ENCODE measurements at regions of chr9 and their contacts with region 1.

Region 1: GRCh38 chr9:83266666-83267496 is 203.9 kb upstream of the RASEF start:
- DNase-seq: no peak

Region 2: DNA sequence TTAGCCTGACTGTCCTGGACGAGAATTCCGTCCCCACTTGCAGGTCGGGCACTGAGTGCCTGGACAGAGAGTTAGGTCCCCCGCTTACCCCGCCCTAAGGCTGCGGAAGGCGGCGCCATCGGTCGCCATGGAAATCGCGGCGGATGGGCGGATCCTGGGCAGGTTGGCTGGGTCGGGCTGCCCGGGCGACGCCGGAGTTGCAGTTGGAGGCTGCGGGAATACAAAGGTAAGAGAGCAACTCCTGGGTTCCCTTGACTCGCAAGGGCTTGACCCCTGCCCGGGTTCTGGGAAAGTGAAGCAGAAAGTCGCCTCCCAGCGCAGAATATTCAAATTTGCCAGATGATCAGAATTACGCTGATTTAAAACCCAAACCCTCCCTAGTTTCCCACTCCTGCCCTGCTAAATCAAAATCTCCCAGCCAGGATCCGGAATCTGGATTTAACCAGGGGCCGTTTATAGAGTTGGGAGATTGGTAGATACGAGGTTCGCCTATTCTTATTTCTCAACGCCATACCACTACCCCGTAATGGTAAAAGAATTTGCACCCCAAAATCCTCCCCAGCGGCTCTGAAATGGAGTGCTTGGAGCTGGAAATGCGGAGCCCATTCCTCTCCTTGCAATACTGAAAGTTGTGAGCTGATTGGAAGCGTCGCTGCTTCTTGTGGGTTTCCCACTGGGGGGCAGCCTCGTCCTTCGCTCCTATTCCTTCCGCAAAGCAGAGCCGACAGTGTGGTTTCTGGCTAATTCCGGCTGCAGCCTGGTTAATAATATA is 47.5 kb before region 1 on chr9:
- intact Hi-C with region 1: loop called (anchors 5 kb)
- DNase-seq: peak; percentile 88

Region 3: GRCh38 chr9:83231033-83231432 is 35.8 kb before region 1 on chr9:
- intact Hi-C with region 1: loop called (anchors 5 kb)
- DNase-seq: no peak

Region 4: GRCh38 chr9:83247732-83248131 is 19.1 kb before region 1 on chr9:
- intact Hi-C with region 1: loop called (anchors 2 kb)
- DNase-seq: no peak